ENCODE measurements at regions of chr17 and their contacts with region 1.

Region 1: GRCh38 chr17:7383742-7384488 is 3.0 kb downstream of the TNK1 start:
- DNase-seq: peak; percentile 82
- H3K4me3 Mint-ChIP-seq: peak overlapping the region; percentile 68
- H3K27ac Mint-ChIP-seq: no peak overlapping the region
- H3K4me1 Mint-ChIP-seq: peaks cover 9% of the 10 kb centered on the region
- H3K27me3 Mint-ChIP-seq: peaks cover 33% of the 10 kb centered on the region

Region 2: GRCh38 chr17:6913608-6914443 is 470.1 kb before region 1 on chr17:
- CTCF ChIA-PET with region 1: no interaction called
- POLR2A ChIA-PET with region 1: no interaction called
- DNase-seq: peak; percentile 74
- H3K4me3 Mint-ChIP-seq: peak overlapping the region; percentile 41
- H3K27ac Mint-ChIP-seq: no peak overlapping the region
- H3K4me1 Mint-ChIP-seq: peaks cover 37% of the 10 kb centered on the region
- H3K27me3 Mint-ChIP-seq: peaks cover 52% of the 10 kb centered on the region

Region 3: GRCh38 chr17:7266784-7267183 is 117.1 kb before region 1 on chr17:
- CTCF ChIA-PET with region 1: no interaction called
- POLR2A ChIA-PET with region 1: no interaction called
- DNase-seq: no peak
- H3K4me3 Mint-ChIP-seq: no peak overlapping the region
- H3K27ac Mint-ChIP-seq: no peak overlapping the region
- H3K4me1 Mint-ChIP-seq: peaks cover 23% of the 10 kb centered on the region
- H3K27me3 Mint-ChIP-seq: peaks cover 43% of the 10 kb centered on the region

Region 4: DNA sequence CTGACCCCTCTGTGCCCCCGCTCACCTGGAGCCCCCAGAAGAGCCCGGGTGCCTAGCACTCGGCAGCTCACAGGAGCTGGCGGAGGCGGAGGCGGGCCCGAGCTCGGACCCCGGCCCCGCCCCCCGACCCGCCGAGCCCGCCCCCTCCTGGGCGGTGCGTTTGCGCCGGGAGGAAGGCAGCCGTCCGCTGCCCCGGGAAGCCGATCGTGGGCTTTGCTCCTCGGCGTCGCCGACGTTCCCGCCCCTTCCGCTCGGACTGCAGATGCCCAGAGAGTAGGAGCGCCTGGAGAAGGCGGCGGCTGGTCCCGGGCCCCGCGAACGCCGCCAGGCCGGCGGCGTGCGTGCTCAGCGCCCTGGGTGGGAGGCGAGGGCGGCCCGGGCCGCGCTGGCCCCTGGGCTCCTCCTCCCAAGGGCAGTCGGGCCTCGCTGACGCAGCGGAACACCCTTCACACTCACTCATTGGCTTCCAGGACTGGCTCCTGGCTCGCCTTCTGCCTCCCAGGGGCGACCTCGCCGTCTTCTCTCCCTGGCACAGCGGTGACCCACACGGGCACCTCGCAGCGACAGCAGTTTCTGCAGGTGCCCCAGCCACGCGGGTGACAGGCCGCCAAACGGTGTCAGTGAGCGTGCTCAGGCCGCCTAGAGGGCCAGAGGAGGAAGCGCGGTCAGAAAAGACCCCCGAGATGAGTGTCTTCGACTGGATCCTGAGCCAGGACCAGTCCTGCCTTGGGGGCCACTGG is 10.7 kb after region 1 on chr17 and contains the start of gene PLSCR3:
- CTCF ChIA-PET with region 1: interaction called, 3 read pairs
- POLR2A ChIA-PET with region 1: interaction called, 16 read pairs
- DNase-seq: peak; percentile 85
- H3K4me3 Mint-ChIP-seq: peak within 1 kb of the TSS; percentile 92
- H3K27ac Mint-ChIP-seq: peak within 1 kb of the TSS; percentile 84
- H3K4me1 Mint-ChIP-seq: peaks cover 37% of the 10 kb centered on the region
- H3K27me3 Mint-ChIP-seq: no peaks in the 10 kb centered on the region
- total RNA-seq, gene PLSCR3: 149 to 156 TPM

Region 5: GRCh38 chr17:7403977-7404736 is 20.2 kb after region 1 on chr17 and contains the start of gene TMEM256:
- CTCF ChIA-PET with region 1: interaction called, 4 read pairs
- POLR2A ChIA-PET with region 1: interaction called, 14 read pairs
- DNase-seq: peak; percentile 98
- H3K4me3 Mint-ChIP-seq: peak within 1 kb of the TSS; percentile 95
- H3K27ac Mint-ChIP-seq: peak within 1 kb of the TSS; percentile 91
- H3K4me1 Mint-ChIP-seq: peaks cover 27% of the 10 kb centered on the region
- H3K27me3 Mint-ChIP-seq: peaks cover 15% of the 10 kb centered on the region
- total RNA-seq, gene TMEM256: 73.2 to 77.0 TPM

Region 6: GRCh38 chr17:7454980-7455379 is 71.1 kb after region 1 on chr17:
- CTCF ChIA-PET with region 1: no interaction called
- POLR2A ChIA-PET with region 1: no interaction called
- DNase-seq: no peak
- H3K4me3 Mint-ChIP-seq: peak overlapping the region; percentile 91
- H3K27ac Mint-ChIP-seq: peak overlapping the region; percentile 92
- H3K4me1 Mint-ChIP-seq: peaks cover 30% of the 10 kb centered on the region
- H3K27me3 Mint-ChIP-seq: no peaks in the 10 kb centered on the region